Dorsolateral prefrontal cortex (tissue), 120 donors: ENCODE measurements at regions of chr16 and their contacts with region 1.

Region 1: DNA sequence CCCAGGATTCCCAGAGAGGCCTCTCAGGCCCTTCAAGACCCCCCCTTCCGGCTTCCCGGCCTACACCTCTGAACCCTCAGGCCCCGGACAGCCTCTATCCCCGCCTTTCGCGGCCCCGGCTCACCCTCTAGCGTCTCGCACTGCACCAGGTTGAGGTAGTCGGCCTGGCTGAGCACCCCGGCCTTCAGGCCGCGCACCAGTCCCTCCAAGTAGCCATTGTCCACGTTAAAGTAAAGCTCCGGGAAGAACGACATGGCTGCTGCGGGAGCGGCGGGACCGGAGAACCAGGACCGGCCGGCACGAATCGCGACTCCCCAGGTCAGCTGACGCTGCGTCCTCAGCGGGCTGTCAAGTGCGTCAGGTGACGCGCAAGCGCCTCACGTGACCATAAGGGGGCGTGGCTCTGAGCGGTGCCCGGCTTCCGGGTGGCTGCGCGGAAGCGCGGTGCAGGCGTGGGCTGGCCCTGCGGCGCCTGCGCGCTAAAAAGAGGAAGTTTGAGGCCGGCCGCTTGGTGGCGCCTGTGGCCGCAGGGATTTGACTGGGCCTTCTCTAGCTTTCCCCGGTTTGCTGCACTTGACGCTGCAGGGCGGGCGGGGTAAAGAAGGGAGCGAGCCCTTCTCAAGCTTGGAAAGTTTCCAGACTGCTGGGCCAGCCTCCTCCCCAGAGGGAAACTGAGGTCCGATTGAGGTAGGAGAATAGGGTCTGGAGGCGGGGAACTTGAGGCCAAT is at the start of gene ATP6V0D1:
- DNase-seq: peak; percentile 95 to 99 (median 98)
- H3K4me3 ChIP-seq: peak within 1 kb of the TSS; percentile 60 to 100 (median 96)
- H3K27ac ChIP-seq: peak within 1 kb of the TSS; percentile 21 to 99 (median 92)
- H3K27me3 ChIP-seq: no peaks in the 10 kb centered on the region
- CTCF ChIP-seq: peak; percentile 83 to 100 (median 95)
- total RNA-seq, gene ATP6V0D1: 97.6 to 219 (median 177) TPM

Region 2: DNA sequence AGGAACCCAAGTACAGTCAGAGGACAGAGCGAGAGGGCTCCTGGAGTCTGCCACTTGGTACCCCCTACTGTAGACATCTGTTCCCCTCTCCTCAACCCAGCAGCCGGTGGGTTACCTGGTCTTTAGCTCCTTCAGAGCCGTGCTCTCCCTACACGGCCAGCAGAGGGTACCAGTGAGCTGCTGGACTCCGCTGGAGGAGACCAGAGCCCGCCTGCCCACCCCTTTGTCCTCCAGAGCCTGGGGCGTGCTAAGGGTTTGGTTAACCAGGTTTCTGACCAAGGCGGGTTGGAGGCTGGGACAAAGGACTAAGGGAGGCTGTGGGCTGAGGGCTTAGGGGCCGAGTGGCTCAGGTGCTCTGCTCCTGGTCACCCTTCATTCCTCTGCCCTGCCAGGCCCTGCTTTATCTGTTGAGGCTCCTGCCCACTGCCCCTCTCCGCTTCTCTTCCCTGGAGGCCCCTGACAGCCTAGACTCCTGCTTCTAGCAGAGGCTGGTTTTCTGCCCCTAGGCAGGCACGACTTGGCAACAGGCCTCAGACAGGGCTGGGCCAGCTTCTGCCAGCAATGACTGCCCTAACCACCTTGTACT is 52.8 kb before region 1 on chr16:
- intact Hi-C with region 1: loop called in 1 of 2 experiments (anchors 5 kb)
- DNase-seq: peak; percentile 33 to 84 (median 56)
- H3K4me3 ChIP-seq: no peak overlapping the region
- H3K27ac ChIP-seq: no peak overlapping the region
- H3K27me3 ChIP-seq: no peaks in the 10 kb centered on the region
- CTCF ChIP-seq: peak in 55 of 56 donors; percentile 32 to 82 (median 69)

Region 3: DNA sequence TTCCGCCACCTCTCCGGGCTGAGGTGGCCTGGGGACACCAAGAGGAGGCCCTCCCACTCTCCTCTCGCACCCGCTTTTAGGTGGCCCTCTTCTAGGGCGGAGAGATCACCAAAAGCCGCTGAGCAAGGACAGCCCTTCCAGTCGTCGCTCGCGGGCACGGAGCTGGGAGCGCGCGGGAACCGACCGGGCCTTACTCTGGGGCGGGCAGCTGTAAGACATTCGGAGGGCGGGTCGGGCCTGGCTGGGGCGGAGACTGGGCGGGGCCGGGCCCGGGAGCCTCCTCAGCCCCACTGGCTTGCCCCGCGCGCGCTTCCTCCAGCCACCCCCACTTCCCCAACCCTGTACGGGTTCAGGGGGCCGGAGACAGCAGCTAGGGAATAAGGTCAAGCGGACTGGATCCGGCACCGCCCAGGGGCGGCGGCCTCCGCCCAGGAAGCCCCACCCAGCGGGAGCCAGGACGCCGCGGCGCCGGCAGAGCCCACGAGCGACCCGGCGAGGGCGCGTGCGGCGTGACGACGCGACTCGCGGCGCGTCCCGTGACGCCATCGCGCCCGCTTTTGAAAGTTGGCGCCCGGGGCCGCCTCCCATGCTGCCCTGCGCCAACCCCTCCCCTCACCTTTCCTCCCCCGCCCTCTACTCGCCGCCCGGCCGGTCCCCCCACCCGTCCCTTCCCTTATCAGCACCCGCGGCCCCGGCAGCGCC is 81.0 kb after region 1 on chr16:
- intact Hi-C with region 1: loop called in 1 of 2 experiments (anchors 5 kb)
- DNase-seq: peak; percentile 79 to 93 (median 88)
- H3K4me3 ChIP-seq: peak overlapping the region; percentile 40 to 100 (median 92)
- H3K27ac ChIP-seq: peak overlapping the region; percentile 31 to 100 (median 99)
- H3K27me3 ChIP-seq: no peaks in the 10 kb centered on the region
- CTCF ChIP-seq: peak in 21 of 56 donors; percentile 6 to 46 (median 23)